Activated CD4-positive, alpha-beta memory T cell treated with anti-CD3 and anti-CD28 coated beads, Interleukin-2, amount 10 ng/mL, durations not matched to agents 7 days and 5 days (primary cell): ENCODE measurements at regions of chr4 and their contacts with region 1.

Region 1: DNA sequence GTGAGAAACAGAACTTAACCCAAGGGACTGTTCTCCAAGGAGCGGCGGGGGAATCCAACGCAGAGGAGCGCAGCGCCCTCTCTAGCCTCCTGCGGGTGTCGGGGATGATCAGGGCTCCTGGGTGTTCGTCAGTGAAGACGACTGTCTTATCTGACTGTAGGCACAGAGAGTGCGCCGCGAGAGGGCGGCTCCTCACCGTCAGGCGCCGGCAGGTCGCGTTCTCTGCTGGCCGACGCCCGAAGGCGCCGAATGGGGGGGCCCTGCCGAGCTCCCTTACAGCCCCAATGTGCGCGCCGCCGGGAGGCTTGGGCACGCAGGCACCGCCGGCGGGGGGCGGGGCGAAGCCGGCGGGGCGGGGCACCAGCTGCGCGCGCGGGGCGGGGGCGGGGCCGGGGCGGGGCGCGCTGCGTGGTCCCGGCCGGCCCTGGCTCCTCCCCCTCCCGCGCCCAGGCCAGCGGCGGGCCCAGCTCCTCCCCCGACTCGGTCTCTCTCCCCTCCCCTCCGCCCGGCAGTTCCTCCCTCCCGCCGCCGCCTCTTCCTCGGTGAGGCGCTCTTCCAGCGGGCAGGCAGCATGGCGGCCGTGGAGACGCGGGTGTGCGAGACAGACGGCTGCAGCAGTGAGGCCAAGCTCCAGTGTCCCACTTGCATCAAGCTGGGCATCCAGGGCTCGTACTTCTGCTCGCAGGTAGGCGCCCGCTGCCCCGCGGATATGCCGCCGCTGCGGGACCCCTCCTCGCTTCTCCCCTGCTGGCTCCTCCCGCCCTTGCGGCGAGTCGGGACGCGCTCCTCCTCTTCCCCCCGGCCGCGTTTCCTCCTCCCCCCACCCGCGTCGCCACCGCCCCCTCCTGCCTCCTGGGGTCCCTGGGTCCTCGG is at the start of gene METAP1:
- DNase-seq: peak; percentile 97
- H3K4me3 Mint-ChIP-seq: peak within 1 kb of the TSS; percentile 79
- H3K27ac Mint-ChIP-seq: peak within 1 kb of the TSS; percentile 98
- H3K4me1 Mint-ChIP-seq: peaks cover 29% of the 10 kb centered on the region
- H3K27me3 Mint-ChIP-seq: no peaks in the 10 kb centered on the region
- total RNA-seq, gene METAP1: 41.5 to 44.9 TPM

Region 2: DNA sequence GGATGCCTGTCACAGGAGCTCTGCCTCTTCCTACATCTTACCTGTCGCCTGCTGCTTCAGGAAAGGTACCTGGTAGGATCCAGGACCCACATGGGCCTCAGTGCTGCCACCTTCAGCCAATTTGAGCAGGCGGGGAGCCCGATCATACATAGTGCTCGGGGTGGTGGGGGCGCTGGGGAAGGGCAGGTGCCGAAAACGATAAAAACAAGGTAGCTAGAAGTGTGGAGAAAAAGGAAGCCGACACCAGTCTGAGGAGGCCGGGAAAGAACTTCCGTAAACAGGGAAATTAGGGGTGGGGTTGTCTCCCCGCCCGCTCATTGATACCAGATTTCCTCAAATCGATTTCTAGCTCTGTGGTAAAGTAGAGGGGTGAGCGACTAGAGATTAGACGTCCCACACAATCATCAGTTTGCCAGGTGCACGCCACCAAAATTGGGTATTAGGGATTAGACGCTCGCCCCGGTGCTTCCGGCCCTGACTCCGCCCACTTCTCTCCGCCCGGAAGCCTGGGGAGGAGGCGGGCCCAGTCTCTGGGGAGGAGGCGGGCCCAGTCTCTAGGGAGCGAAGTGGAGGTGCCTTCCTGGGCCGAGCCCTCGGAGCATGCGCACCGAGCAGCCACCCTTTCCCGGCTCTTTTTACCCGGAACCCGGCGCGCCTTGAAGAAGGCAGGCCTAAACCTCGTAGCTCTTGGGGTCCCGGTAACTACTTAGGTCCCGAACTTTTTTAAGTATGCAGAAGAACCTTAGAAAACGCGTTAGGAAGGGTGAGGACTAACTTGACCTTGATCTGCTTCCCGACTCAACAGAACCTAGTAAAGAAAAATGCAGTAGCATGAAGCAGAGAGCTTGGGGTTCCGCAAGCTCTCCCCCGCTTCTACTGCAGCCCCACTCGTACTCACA is 852.2 kb before region 1 on chr4 and contains the start of gene STPG2:
- CTCF ChIA-PET with region 1: interaction called, 12 read pairs
- POLR2A ChIA-PET with region 1: interaction called, 6 read pairs
- DNase-seq: peak; percentile 94
- H3K4me3 Mint-ChIP-seq: peak within 1 kb of the TSS; percentile 79
- H3K27ac Mint-ChIP-seq: peak within 1 kb of the TSS; percentile 85
- H3K4me1 Mint-ChIP-seq: peaks cover 27% of the 10 kb centered on the region
- H3K27me3 Mint-ChIP-seq: peaks cover under 1% of the 10 kb centered on the region
- total RNA-seq, gene STPG2: not detected

Region 3: DNA sequence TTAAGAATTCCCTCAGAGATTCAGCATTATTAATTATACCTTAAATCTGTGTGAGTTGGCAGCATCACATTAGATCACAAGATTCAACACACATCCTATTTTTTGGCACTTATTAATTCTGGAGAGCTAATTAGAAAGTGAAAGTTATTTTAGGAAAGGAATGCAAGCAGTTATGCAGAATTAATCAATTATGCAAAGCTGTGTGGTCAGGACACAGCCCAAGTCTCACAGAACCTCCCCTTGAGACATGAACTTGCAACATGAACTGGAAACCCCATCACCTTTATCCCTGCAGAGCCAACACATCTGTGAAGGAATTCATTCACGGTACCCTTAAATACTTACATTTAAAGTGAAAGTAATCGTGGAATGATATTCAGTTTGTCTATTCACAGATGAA is 417.5 kb before region 1 on chr4:
- CTCF ChIA-PET with region 1: no interaction called
- POLR2A ChIA-PET with region 1: no interaction called
- DNase-seq: no peak
- H3K4me3 Mint-ChIP-seq: no peak overlapping the region
- H3K27ac Mint-ChIP-seq: no peak overlapping the region
- H3K4me1 Mint-ChIP-seq: peaks cover 8% of the 10 kb centered on the region
- H3K27me3 Mint-ChIP-seq: no peaks in the 10 kb centered on the region

Region 4: DNA sequence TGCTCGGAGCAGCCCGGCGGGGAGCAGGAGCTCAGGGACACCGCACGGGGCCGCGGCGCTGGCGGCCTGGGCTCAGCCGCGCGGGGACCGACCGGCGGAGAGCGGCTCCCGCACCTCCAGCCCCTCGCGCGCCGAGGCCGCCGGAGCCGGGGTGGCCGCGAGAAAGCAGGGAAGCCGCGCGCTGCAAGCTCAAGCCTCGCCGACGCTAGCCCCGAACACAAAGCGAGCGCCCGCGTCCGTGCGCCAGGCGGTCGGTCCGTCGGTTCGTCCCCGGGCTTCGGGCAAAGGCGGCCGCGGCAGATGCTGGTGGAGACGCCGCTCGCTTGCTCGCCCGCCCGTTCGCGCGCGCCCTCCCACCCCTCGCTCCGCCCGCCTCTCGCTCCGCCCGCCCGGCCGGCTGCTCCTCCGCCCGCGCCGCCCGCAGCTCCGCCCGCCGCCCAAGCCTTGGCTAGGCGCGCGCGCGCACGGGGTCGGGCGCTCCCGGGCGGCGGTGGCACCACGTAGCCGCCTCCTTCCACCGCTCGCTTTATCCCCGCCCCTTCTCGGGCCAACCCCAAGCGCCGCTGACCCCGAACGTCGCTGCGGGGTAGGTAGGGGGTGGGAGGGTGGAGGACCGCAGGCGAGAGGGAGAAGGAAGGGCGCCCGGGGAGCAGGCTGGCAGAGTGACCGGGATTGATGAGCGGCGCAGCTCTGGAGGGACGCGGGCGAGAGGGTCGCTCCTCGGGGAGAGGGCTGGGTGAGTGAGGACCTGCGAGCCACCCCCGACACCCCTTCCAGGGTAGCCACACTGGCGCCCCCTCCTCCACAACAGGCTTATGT is 336.9 kb before region 1 on chr4 and contains the start of gene TSPAN5:
- CTCF ChIA-PET with region 1: interaction called, 7 read pairs
- POLR2A ChIA-PET with region 1: interaction called, 12 read pairs
- DNase-seq: peak; percentile 83
- H3K4me3 Mint-ChIP-seq: peak within 1 kb of the TSS; percentile 93
- H3K27ac Mint-ChIP-seq: peak within 1 kb of the TSS; percentile 74
- H3K4me1 Mint-ChIP-seq: peaks cover 75% of the 10 kb centered on the region
- H3K27me3 Mint-ChIP-seq: no peaks in the 10 kb centered on the region
- total RNA-seq, gene TSPAN5: 21.8 to 22.6 TPM

Region 5: DNA sequence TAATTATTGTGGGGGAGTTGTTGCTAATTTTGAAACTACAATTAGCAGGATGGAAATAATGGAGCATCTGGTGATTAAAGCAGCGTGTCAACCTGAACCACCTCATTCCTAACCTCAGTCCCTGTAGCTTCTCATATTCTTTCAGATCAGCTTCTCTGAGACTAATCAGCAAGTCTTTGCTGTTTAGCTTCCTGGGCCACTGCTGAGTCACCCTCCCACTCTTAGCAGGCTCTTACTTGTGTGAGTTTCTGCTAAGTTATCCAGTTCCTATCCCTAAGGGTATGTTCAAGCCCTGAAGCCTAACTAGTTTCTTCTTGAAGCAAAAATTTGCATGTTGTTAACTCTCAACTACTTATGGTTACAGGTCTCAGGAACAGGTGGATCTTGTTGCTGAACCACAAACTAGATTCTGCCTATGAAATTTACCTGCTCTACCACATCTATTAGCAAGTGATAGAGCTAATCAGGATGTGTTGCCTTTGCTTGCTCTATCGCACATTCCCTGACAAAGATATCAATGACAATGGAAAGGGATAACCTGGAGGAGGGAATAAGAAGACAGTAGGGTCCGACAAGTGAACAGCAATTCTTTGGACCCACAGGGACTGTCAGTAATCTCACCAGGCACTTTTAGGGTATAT is 200.7 kb before region 1 on chr4:
- CTCF ChIA-PET with region 1: no interaction called
- POLR2A ChIA-PET with region 1: no interaction called
- DNase-seq: no peak
- H3K4me3 Mint-ChIP-seq: no peak overlapping the region
- H3K27ac Mint-ChIP-seq: no peak overlapping the region
- H3K4me1 Mint-ChIP-seq: no peaks in the 10 kb centered on the region
- H3K27me3 Mint-ChIP-seq: no peaks in the 10 kb centered on the region

Region 6: GRCh38 chr4:99043346-99043745 is 47.9 kb after region 1 on chr4:
- CTCF ChIA-PET with region 1: interaction called, 9 read pairs
- POLR2A ChIA-PET with region 1: interaction called, 13 read pairs
- DNase-seq: no peak
- H3K4me3 Mint-ChIP-seq: no peak overlapping the region
- H3K27ac Mint-ChIP-seq: peak overlapping the region; percentile 74
- H3K4me1 Mint-ChIP-seq: peaks cover 20% of the 10 kb centered on the region
- H3K27me3 Mint-ChIP-seq: no peaks in the 10 kb centered on the region

Region 7: GRCh38 chr4:99074816-99075215 is 79.4 kb after region 1 on chr4:
- CTCF ChIA-PET with region 1: interaction called, 18 read pairs
- POLR2A ChIA-PET with region 1: no interaction called
- DNase-seq: no peak
- H3K4me3 Mint-ChIP-seq: no peak overlapping the region
- H3K27ac Mint-ChIP-seq: no peak overlapping the region
- H3K4me1 Mint-ChIP-seq: peaks cover 2% of the 10 kb centered on the region
- H3K27me3 Mint-ChIP-seq: no peaks in the 10 kb centered on the region

Region 8: DNA sequence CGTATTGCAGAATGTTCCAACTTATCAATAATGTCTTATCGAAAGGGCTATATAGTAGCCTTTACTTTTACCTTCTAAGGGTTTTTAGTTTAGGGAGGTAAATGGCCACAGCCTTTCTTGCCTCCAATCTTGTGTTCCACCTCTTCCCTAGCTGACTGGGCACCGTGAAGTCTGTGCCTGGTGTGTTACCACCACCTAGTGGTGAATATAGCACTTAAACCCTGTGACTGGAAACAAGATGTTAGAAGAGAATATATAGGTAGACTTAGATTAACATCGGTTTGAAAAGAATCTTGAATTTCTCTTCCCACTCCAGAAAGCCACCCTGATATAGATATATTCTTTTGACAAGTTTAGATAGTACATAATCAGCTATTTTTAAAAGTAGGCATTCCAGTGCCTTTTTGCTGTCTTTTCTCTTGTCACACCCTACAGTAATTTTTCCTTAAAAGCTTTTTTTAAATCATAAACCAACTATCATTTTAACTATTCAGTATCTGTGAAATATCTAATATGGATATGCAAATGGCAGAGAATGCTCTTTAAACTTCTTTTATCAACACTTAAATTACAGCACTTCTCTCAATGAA is 467.6 kb after region 1 on chr4:
- CTCF ChIA-PET with region 1: interaction called, 10 read pairs
- POLR2A ChIA-PET with region 1: no interaction called
- DNase-seq: peak; percentile 49
- H3K4me3 Mint-ChIP-seq: no peak overlapping the region
- H3K27ac Mint-ChIP-seq: no peak overlapping the region
- H3K4me1 Mint-ChIP-seq: no peaks in the 10 kb centered on the region
- H3K27me3 Mint-ChIP-seq: peaks cover 26% of the 10 kb centered on the region